CD4-positive, alpha-beta memory T cell (primary cell): ENCODE measurements at regions of chr1 and their contacts with region 1.

Region 1: GRCh38 chr1:33127001-33127791 is 46.2 kb downstream of the AZIN2 start:
- DNase-seq: peak; percentile 98 to 100 (median 99)
- H3K4me3 ChIP-seq: peak overlapping the region; percentile 83 to 92
- H3K4me3 Mint-ChIP-seq: peak overlapping the region; percentile 92 to 97 (median 95)
- H3K27ac ChIP-seq: peak overlapping the region; percentile 84
- H3K27ac Mint-ChIP-seq: peak overlapping the region; percentile 96 to 99 (median 98)
- H3K4me1 ChIP-seq: peaks cover 34% of the 10 kb centered on the region
- H3K4me1 Mint-ChIP-seq: peaks cover 32 to 58% (median 44%) of the 10 kb centered on the region in 4 donors
- H3K27me3 ChIP-seq: no peaks in the 10 kb centered on the region
- H3K27me3 Mint-ChIP-seq: no peaks in the 10 kb centered on the region

Region 2: GRCh38 chr1:32817159-32817814 is 309.9 kb before region 1 on chr1 and contains the starts of genes S100PBP and YARS1:
- CTCF ChIA-PET with region 1: no interaction called
- POLR2A ChIA-PET with region 1: interaction called, 11 read pairs
- intact Hi-C with region 1: loop called (anchors 5 kb)
- DNase-seq: peak; percentile 99 to 100 (median 99)
- H3K4me3 ChIP-seq: peak within 1 kb of the TSS; percentile 67 to 70
- H3K4me3 Mint-ChIP-seq: peak within 1 kb of the TSS; percentile 94 to 100 (median 96)
- H3K27ac ChIP-seq: peak within 1 kb of the TSS; percentile 89
- H3K27ac Mint-ChIP-seq: peak within 1 kb of the TSS; percentile 82 to 97 (median 95)
- H3K4me1 ChIP-seq: peaks cover 60% of the 10 kb centered on the region
- H3K4me1 Mint-ChIP-seq: peaks cover 36 to 71% (median 51%) of the 10 kb centered on the region in 4 donors
- H3K27me3 ChIP-seq: no peaks in the 10 kb centered on the region
- H3K27me3 Mint-ChIP-seq: no peaks in the 10 kb centered on the region
- total RNA-seq, gene S100PBP: 63.2 to 65.5 TPM
- total RNA-seq, gene YARS1: 110 to 114 TPM

Region 3: GRCh38 chr1:33080885-33081553 is 46.2 kb before region 1 on chr1 and contains the start of gene AZIN2:
- CTCF ChIA-PET with region 1: interaction called, 8 read pairs
- POLR2A ChIA-PET with region 1: interaction called, 24 read pairs
- intact Hi-C with region 1: loop called (anchors 1 kb)
- DNase-seq: peak; percentile 94 to 98 (median 96)
- H3K4me3 ChIP-seq: peak within 1 kb of the TSS; percentile 42 to 84
- H3K4me3 Mint-ChIP-seq: peak within 1 kb of the TSS; percentile 82 to 89 (median 86)
- H3K27ac ChIP-seq: peak within 1 kb of the TSS; percentile 58
- H3K27ac Mint-ChIP-seq: peak within 1 kb of the TSS; percentile 85 to 92 (median 90)
- H3K4me1 ChIP-seq: peaks cover 28% of the 10 kb centered on the region
- H3K4me1 Mint-ChIP-seq: peaks cover 11 to 44% (median 27%) of the 10 kb centered on the region in 4 donors
- H3K27me3 ChIP-seq: no peaks in the 10 kb centered on the region
- H3K27me3 Mint-ChIP-seq: no peaks in the 10 kb centered on the region
- total RNA-seq, gene AZIN2: 6.9 to 8.0 TPM

Region 4: GRCh38 chr1:33137800-33138199 is 10.6 kb after region 1 on chr1:
- CTCF ChIA-PET with region 1: interaction called, 7 read pairs
- POLR2A ChIA-PET with region 1: interaction called, 22 read pairs
- intact Hi-C with region 1: no loop called
- DNase-seq: peak in 1 of 5 donors; percentile 11
- H3K4me3 ChIP-seq: no peak overlapping the region
- H3K4me3 Mint-ChIP-seq: no peak overlapping the region
- H3K27ac ChIP-seq: no peak overlapping the region
- H3K27ac Mint-ChIP-seq: peak overlapping the region in 3 of 7 donors; percentile 35 to 57 (median 53)
- H3K4me1 ChIP-seq: no peaks in the 10 kb centered on the region
- H3K4me1 Mint-ChIP-seq: peaks cover 10 to 17% (median 13%) of the 10 kb centered on the region in 4 donors
- H3K27me3 ChIP-seq: no peaks in the 10 kb centered on the region
- H3K27me3 Mint-ChIP-seq: no peaks in the 10 kb centered on the region

Region 5: DNA sequence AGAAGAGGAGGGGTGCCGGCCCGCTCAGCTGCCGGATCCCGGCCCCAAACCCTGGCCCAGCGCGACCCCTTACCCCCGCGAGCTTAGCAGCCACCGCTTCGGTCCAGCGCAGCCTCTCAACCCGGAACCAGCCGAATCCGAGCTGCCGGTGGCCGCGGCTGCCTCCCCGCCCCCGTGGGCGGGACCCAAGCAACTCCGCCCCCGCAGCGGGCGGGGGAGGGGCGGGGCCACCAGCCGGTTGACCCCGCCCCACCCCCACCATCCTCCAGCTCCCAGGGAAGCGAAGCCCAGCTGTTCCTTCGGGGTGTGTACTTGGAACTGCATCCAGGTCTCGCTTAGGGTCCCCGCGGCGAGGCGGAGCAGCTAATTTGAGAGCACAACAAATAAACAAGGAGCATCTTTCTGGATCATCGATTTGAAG is 54.7 kb after region 1 on chr1 and contains the start of gene TRIM62:
- CTCF ChIA-PET with region 1: interaction called, 24 read pairs
- POLR2A ChIA-PET with region 1: interaction called, 99 read pairs
- intact Hi-C with region 1: loop called (anchors 1 kb)
- DNase-seq: peak; percentile 70 to 80 (median 73)
- H3K4me3 ChIP-seq: peak within 1 kb of the TSS; percentile 54 to 73
- H3K4me3 Mint-ChIP-seq: peak within 1 kb of the TSS; percentile 86 to 93 (median 92)
- H3K27ac ChIP-seq: peak within 1 kb of the TSS; percentile 58
- H3K27ac Mint-ChIP-seq: peak within 1 kb of the TSS; percentile 63 to 95 (median 91)
- H3K4me1 ChIP-seq: peaks cover 16% of the 10 kb centered on the region
- H3K4me1 Mint-ChIP-seq: peaks cover 19 to 46% (median 33%) of the 10 kb centered on the region in 4 donors
- H3K27me3 ChIP-seq: no peaks in the 10 kb centered on the region
- H3K27me3 Mint-ChIP-seq: peaks cover 0 to 5% of the 10 kb centered on the region in 2 donors
- total RNA-seq, gene TRIM62: 20.0 to 26.2 TPM

Region 6: GRCh38 chr1:33256701-33257399 is 129.7 kb after region 1 on chr1:
- CTCF ChIA-PET with region 1: no interaction called
- POLR2A ChIA-PET with region 1: interaction called, 11 read pairs
- intact Hi-C with region 1: loop called (anchors 2 kb)
- DNase-seq: peak; percentile 58 to 69 (median 60)
- H3K4me3 ChIP-seq: peak overlapping the region; percentile 33 to 55
- H3K4me3 Mint-ChIP-seq: peak overlapping the region; percentile 96 to 100 (median 100)
- H3K27ac ChIP-seq: peak overlapping the region; percentile 40
- H3K27ac Mint-ChIP-seq: peak overlapping the region; percentile 92 to 99 (median 98)
- H3K4me1 ChIP-seq: peaks cover 35% of the 10 kb centered on the region
- H3K4me1 Mint-ChIP-seq: peaks cover 25 to 48% (median 33%) of the 10 kb centered on the region in 4 donors
- H3K27me3 ChIP-seq: no peaks in the 10 kb centered on the region
- H3K27me3 Mint-ChIP-seq: peaks cover 0 to 2% of the 10 kb centered on the region in 2 donors

Region 7: GRCh38 chr1:33472349-33472980 is 345.3 kb after region 1 on chr1 and contains the start of gene ZSCAN20:
- CTCF ChIA-PET with region 1: interaction called, 4 read pairs
- POLR2A ChIA-PET with region 1: interaction called, 3 read pairs
- intact Hi-C with region 1: loop called (anchors 5 kb)
- DNase-seq: peak; percentile 76 to 81 (median 77)
- H3K4me3 ChIP-seq: peak within 1 kb of the TSS; percentile 43 to 66
- H3K4me3 Mint-ChIP-seq: peak within 1 kb of the TSS; percentile 87 to 99 (median 93)
- H3K27ac ChIP-seq: peak within 1 kb of the TSS; percentile 53
- H3K27ac Mint-ChIP-seq: peak within 1 kb of the TSS; percentile 72 to 96 (median 89)
- H3K4me1 ChIP-seq: peaks cover 17% of the 10 kb centered on the region
- H3K4me1 Mint-ChIP-seq: peaks cover 19 to 34% (median 27%) of the 10 kb centered on the region in 4 donors
- H3K27me3 ChIP-seq: no peaks in the 10 kb centered on the region
- H3K27me3 Mint-ChIP-seq: no peaks in the 10 kb centered on the region
- total RNA-seq, gene ZSCAN20: 3.8 to 3.9 TPM

Region 8: GRCh38 chr1:34113887-34114286 is 986.7 kb after region 1 on chr1:
- CTCF ChIA-PET with region 1: no interaction called
- POLR2A ChIA-PET with region 1: no interaction called
- intact Hi-C with region 1: no loop called
- DNase-seq: no peak
- H3K4me3 ChIP-seq: no peak overlapping the region
- H3K4me3 Mint-ChIP-seq: no peak overlapping the region
- H3K27ac ChIP-seq: no peak overlapping the region
- H3K27ac Mint-ChIP-seq: no peak overlapping the region
- H3K4me1 ChIP-seq: no peaks in the 10 kb centered on the region
- H3K4me1 Mint-ChIP-seq: no peaks in the 10 kb centered on the region
- H3K27me3 ChIP-seq: no peaks in the 10 kb centered on the region
- H3K27me3 Mint-ChIP-seq: peaks cover under 1 to 5% of the 10 kb centered on the region in 2 donors